ENCODE measurements at regions of chr9 and their contacts with region 1.

Region 1: GRCh38 chr9:15416880-15417279 is 5.8 kb upstream of the SNAPC3 start:
- DNase-seq: peak; percentile 74
- ATAC-seq: peak; percentile 53
- H3K4me3 ChIP-seq: no peak overlapping the region
- H3K27ac ChIP-seq: no peak overlapping the region
- H3K4me1 ChIP-seq: peaks cover 2% of the 10 kb centered on the region
- H3K27me3 ChIP-seq: no peaks in the 10 kb centered on the region
- CTCF ChIP-seq: peak; percentile 70

Region 2: GRCh38 chr9:15142878-15143534 is 273.9 kb before region 1 on chr9:
- CTCF ChIA-PET with region 1: no interaction called
- POLR2A ChIA-PET with region 1: no interaction called
- intact Hi-C with region 1: loop called (anchors 5 kb)
- DNase-seq: peak; percentile 65
- ATAC-seq: peak; percentile 46; the same call in 1 of the 2 replicates
- H3K4me3 ChIP-seq: no peak overlapping the region
- H3K27ac ChIP-seq: no peak overlapping the region
- H3K4me1 ChIP-seq: peaks cover 18% of the 10 kb centered on the region
- H3K27me3 ChIP-seq: no peaks in the 10 kb centered on the region
- CTCF ChIP-seq: peak; percentile 73

Region 3: DNA sequence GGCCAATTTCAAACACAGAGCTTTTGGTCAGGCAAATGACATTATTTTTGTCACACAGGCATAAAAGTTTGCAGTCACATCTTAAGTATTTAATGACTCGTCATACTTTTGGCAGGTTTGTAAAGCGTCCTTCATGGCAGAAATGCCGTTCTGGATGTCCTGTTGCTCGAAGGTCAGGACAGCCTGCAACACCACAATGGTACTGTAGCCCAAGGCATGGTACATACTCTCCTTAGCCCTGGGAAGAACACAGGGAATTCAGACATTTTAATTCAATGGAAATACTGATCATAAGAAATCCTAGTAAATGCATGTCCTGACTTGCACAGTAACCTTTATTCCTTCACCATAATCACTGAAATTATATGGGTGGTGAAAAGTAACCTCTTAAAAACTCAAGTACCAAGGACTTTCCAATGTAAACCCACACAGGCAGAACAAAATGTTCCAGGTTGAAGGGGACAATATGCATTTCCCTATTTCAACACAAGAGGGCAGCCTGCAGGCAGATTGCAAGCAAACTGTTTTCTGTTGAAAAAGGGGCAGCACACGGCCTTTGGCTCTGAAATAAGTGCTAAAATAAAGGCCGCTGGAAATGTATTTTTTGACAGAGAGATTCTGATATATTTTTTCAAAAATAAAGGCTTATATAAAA is 205.6 kb before region 1 on chr9:
- CTCF ChIA-PET with region 1: no interaction called
- POLR2A ChIA-PET with region 1: no interaction called
- intact Hi-C with region 1: loop called (anchors 1 kb)
- DNase-seq: peak; percentile 75
- ATAC-seq: 0 out of 2 replicates have a peak, but pooled peaks have one; percentile 40
- H3K4me3 ChIP-seq: no peak overlapping the region
- H3K27ac ChIP-seq: no peak overlapping the region
- H3K4me1 ChIP-seq: peaks cover 4% of the 10 kb centered on the region; the same call in 1 of the 2 replicates
- H3K27me3 ChIP-seq: no peaks in the 10 kb centered on the region
- CTCF ChIP-seq: peak; percentile 78

Measured in PC-3 (cell line).